ENCODE measurements at regions of chr12 and their contacts with region 1.

Region 1: DNA sequence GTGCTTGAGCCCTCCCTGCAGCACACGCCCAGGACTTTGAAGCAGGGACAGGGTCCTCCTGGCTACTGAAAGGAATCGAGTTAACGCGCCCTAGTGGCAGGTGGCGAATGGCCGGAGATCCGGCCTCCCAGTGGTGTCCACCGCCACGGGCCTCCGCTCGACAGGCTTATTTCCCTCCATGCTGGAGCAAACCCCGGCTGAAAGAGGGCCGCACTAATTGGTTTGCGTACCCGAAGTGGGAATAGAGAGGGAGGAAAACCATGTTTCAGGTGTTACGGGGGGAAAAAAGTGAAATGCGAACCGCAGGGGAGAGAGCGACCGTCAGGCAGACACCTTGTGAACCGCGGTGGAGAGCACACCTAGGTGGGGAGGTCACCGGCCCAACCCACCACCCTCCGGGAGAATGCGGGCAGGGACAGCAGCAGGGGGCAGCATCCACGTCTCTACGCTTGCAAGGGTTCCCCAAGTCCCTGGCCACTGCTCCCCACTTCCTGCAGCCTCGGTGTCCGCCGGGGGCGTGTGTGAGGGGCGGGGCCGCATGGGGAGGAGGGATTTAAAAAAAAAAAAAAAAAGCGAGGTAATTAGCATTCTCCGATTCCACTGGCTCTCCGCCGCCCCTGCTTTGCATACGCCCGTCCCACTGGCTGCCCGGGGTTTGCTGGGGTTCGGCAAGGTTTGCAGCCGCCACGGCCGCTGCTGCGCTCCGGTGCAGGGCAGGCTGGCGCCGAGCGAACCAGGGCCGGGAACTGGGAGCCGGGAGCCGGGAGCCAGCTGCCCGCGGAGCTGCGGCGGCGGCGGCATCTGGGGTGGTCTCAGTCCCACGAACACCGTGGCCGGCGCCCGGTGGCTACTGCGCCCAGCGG is 224.6 kb upstream of the CRY1 start:
- DNase-seq: peak; percentile 93
- H3K4me3 Mint-ChIP-seq: peak overlapping the region; percentile 82
- H3K27ac Mint-ChIP-seq: no peak overlapping the region
- H3K4me1 Mint-ChIP-seq: peaks cover 26% of the 10 kb centered on the region
- H3K27me3 Mint-ChIP-seq: peaks cover 8% of the 10 kb centered on the region

Region 2: DNA sequence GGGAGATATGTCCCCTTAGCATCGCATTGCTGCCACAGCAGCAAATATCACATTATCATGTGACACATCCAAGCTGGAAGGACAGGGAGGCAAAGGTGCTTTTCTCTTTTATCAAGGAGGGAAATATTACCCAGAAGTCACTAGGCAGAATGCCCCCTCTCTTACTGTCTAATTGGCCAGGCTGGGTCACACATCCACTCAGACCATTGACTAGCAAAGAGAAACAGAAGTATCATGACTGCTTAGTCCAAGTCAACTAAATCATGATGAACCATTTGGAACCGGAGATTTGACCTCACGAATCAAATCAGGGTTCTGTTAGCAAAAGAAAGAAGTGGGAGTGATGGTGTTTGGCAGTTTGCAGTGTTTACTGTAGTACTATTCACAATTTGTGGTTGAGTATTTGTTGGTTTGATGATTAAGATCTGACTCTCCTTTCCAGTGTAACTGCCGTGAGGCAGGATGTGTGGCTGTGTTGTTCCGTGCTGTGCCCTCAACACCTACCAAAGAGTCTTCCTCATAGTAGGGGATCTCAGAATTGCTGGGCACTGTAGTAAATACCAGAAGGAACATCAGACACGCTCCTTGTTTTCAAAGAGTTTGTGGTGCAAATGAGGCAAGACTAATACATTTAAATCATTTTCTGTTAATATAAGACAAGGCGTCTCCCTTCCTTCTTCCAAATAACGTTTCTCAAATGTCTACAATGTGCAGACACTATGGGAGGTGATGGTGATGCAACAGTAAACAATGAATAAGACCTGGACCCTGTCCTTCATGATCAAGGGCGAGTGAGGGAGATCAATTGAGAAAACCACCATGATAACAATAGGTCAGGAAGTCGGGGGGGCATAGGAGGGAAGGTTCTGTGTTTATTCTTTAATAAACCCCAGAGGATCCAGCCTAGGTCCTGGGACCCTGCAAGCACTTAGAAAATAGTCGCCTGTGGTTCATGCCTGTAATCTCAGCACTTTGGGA is 30.3 kb before region 1 on chr12:
- CTCF ChIA-PET with region 1: no interaction called
- POLR2A ChIA-PET with region 1: no interaction called
- intact Hi-C with region 1: loop called (anchors 2 kb)
- DNase-seq: peak; percentile 75
- H3K4me3 Mint-ChIP-seq: no peak overlapping the region
- H3K27ac Mint-ChIP-seq: peak overlapping the region; percentile 54
- H3K4me1 Mint-ChIP-seq: peaks cover 16% of the 10 kb centered on the region
- H3K27me3 Mint-ChIP-seq: no peaks in the 10 kb centered on the region

Region 3: GRCh38 chr12:107337346-107338095 is 19.5 kb after region 1 on chr12:
- CTCF ChIA-PET with region 1: no interaction called
- POLR2A ChIA-PET with region 1: no interaction called
- intact Hi-C with region 1: loop called (anchors 2 kb)
- DNase-seq: peak; percentile 54
- H3K4me3 Mint-ChIP-seq: no peak overlapping the region
- H3K27ac Mint-ChIP-seq: peak overlapping the region; percentile 50
- H3K4me1 Mint-ChIP-seq: peaks cover 44% of the 10 kb centered on the region
- H3K27me3 Mint-ChIP-seq: no peaks in the 10 kb centered on the region

Region 4: GRCh38 chr12:107372229-107372658 is 54.3 kb after region 1 on chr12:
- CTCF ChIA-PET with region 1: interaction called, 28 read pairs
- POLR2A ChIA-PET with region 1: interaction called, 20 read pairs
- intact Hi-C with region 1: loop called (anchors 1 kb)
- DNase-seq: peak; percentile 54
- H3K4me3 Mint-ChIP-seq: no peak overlapping the region
- H3K27ac Mint-ChIP-seq: peak overlapping the region; percentile 89
- H3K4me1 Mint-ChIP-seq: peaks cover 70% of the 10 kb centered on the region
- H3K27me3 Mint-ChIP-seq: no peaks in the 10 kb centered on the region

Region 5: GRCh38 chr12:107607464-107608392 is 289.7 kb after region 1 on chr12:
- CTCF ChIA-PET with region 1: interaction called, 5 read pairs
- POLR2A ChIA-PET with region 1: no interaction called
- intact Hi-C with region 1: loop called (anchors 1 kb)
- DNase-seq: peak; percentile 84
- H3K4me3 Mint-ChIP-seq: no peak overlapping the region
- H3K27ac Mint-ChIP-seq: no peak overlapping the region
- H3K4me1 Mint-ChIP-seq: no peaks in the 10 kb centered on the region
- H3K27me3 Mint-ChIP-seq: no peaks in the 10 kb centered on the region

Measured in activated CD4-positive, alpha-beta memory T cell treated with anti-CD3 and anti-CD28 coated beads for 36 hours (primary cell).